ENCODE measurements at regions of chr5 and their contacts with region 1.

Region 1: GRCh38 chr5:139417214-139417613 is 13.3 kb upstream of the SPATA24 start:
- DNase-seq: no peak
- H3K4me3 Mint-ChIP-seq: no peak overlapping the region
- H3K27ac Mint-ChIP-seq: peak overlapping the region; percentile 97
- H3K4me1 Mint-ChIP-seq: peaks cover 59% of the 10 kb centered on the region
- H3K27me3 Mint-ChIP-seq: no peaks in the 10 kb centered on the region

Region 2: GRCh38 chr5:139262742-139263445 is 154.3 kb before region 1 on chr5:
- intact Hi-C with region 1: no loop called
- DNase-seq: peak; percentile 57
- H3K4me3 Mint-ChIP-seq: no peak overlapping the region
- H3K27ac Mint-ChIP-seq: no peak overlapping the region
- H3K4me1 Mint-ChIP-seq: peaks cover 11% of the 10 kb centered on the region
- H3K27me3 Mint-ChIP-seq: peaks cover 25% of the 10 kb centered on the region

Region 3: GRCh38 chr5:139392678-139393496 is 24.3 kb before region 1 on chr5:
- intact Hi-C with region 1: loop called (anchors 1 kb)
- DNase-seq: peak; percentile 84
- H3K4me3 Mint-ChIP-seq: peak overlapping the region; percentile 96
- H3K27ac Mint-ChIP-seq: peak overlapping the region; percentile 97
- H3K4me1 Mint-ChIP-seq: peaks cover 51% of the 10 kb centered on the region
- H3K27me3 Mint-ChIP-seq: no peaks in the 10 kb centered on the region

Region 4: GRCh38 chr5:139439013-139439903 is 22.0 kb after region 1 on chr5 and contains the start of gene DNAJC18:
- intact Hi-C with region 1: loop called (anchors 2 kb)
- DNase-seq: peak; percentile 84
- H3K4me3 Mint-ChIP-seq: peak within 1 kb of the TSS; percentile 93
- H3K27ac Mint-ChIP-seq: peak within 1 kb of the TSS; percentile 98
- H3K4me1 Mint-ChIP-seq: peaks cover 58% of the 10 kb centered on the region
- H3K27me3 Mint-ChIP-seq: no peaks in the 10 kb centered on the region
- total RNA-seq, gene DNAJC18: 29.8 and 35.8 TPM in 2 replicates

Region 5: GRCh38 chr5:139458580-139459406 is 41.6 kb after region 1 on chr5:
- intact Hi-C with region 1: loop called (anchors 1 kb)
- DNase-seq: peak; percentile 77
- H3K4me3 Mint-ChIP-seq: peak overlapping the region; percentile 72
- H3K27ac Mint-ChIP-seq: peak overlapping the region; percentile 99
- H3K4me1 Mint-ChIP-seq: peaks cover 59% of the 10 kb centered on the region
- H3K27me3 Mint-ChIP-seq: no peaks in the 10 kb centered on the region

Region 6: GRCh38 chr5:139492700-139493192 is 75.5 kb after region 1 on chr5:
- intact Hi-C with region 1: no loop called
- DNase-seq: no peak
- H3K4me3 Mint-ChIP-seq: no peak overlapping the region
- H3K27ac Mint-ChIP-seq: no peak overlapping the region
- H3K4me1 Mint-ChIP-seq: peaks cover 33% of the 10 kb centered on the region
- H3K27me3 Mint-ChIP-seq: no peaks in the 10 kb centered on the region

Region 7: DNA sequence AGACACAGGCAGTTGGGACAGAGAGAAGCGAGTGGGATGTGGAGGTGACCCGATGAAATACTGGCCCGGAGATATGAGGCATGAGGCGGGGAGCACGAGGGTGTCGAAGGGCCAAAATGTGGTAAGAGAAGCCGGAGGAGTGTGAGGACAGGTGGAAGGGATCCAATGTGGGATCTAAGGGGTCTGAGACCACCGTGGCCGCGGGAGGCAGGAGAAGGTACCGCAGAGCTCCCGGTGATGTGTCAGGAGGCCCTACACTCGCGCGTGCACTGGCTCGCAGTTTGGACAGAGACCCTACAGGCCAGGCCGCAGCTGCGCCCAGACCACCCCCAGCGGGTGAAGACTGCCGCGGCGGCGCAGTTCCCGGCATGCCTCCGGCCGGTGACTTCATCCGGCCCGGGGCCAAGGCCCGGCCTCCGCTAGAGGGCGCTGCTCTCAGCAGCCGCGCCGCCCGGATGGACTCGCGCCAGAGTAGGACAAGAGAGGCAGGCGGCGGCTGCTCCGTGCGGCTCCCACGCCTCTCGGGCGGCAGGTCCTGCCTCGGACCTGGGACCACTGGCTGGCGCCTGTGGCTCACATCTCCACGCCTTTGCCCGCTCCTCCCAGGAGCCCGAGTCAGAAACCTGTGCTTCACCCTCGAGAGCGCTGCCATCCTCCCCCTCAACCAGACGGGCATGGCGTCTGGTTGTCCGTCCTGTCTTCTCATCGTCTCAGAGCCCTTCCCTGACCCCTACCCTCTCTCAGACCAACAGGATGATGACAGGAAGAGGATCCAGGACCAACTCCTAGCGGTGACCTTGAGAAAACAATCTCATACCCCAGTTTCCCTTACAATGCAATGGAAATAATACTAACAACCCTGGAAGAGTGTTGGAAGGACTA is 100.7 kb after region 1 on chr5:
- intact Hi-C with region 1: loop called (anchors 1 kb)
- DNase-seq: peak; percentile 85
- H3K4me3 Mint-ChIP-seq: peak overlapping the region; percentile 79
- H3K27ac Mint-ChIP-seq: peak overlapping the region; percentile 88
- H3K4me1 Mint-ChIP-seq: peaks cover 23% of the 10 kb centered on the region
- H3K27me3 Mint-ChIP-seq: no peaks in the 10 kb centered on the region

Region 8: DNA sequence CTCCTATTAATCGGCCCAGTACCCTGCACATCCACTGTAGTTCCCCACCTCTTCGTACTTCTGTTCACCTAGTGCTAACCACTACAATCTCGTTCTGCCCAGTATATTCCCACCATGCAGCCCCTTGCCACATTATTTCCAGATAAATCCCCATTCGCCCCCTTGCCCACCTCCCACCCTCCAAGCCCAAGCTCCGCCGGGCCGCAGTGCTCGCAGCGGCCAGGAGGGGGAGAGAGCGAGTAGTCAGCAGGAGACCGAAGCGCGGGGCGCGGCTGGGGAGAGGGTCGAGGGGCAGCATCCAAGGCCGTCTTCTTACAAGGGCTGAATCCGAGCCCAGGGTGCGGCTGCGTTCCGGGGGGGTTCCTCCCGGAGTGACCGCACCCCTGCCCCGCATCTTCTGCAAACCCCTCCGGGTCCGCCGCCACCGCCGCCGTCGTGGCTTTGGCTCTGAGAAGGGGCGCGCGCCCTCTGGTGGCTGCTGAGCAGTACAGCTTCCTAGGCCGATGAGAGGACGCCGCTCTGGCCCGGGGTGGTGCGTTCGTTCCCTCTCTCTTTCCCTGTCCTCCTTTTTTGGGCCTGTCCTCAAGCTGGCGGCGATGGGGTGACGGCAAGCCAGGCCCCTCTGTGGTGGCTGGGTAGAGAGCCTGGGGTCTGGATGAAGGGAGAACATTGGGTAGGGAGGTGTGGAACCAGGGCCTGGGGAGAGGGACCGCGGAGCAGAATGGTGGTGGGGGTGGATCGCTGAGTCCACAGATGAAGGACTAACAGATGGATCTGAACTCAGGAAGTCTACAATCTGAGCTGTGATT is 348.4 kb after region 1 on chr5:
- intact Hi-C with region 1: loop called (anchors 10 kb)
- DNase-seq: peak; percentile 68
- H3K4me3 Mint-ChIP-seq: peak overlapping the region; percentile 56
- H3K27ac Mint-ChIP-seq: no peak overlapping the region
- H3K4me1 Mint-ChIP-seq: peaks cover 8% of the 10 kb centered on the region
- H3K27me3 Mint-ChIP-seq: peaks cover 39% of the 10 kb centered on the region

Region 9: GRCh38 chr5:139863855-139864558 is 446.8 kb after region 1 on chr5:
- intact Hi-C with region 1: no loop called
- DNase-seq: peak; percentile 12
- H3K4me3 Mint-ChIP-seq: no peak overlapping the region
- H3K27ac Mint-ChIP-seq: no peak overlapping the region
- H3K4me1 Mint-ChIP-seq: no peaks in the 10 kb centered on the region
- H3K27me3 Mint-ChIP-seq: peaks cover 11% of the 10 kb centered on the region

Measured in activated T-helper 2 cell treated with anti-CD3 and anti-CD28 coated beads, Interferon-gamma antibody, Interleukin-2, Interleukin-4, amounts not matched to agents 10 μg/mL and 5 μg/mL and 100 μg/mL, durations not matched to agents 14 hours and 24 hours and 36 hours (primary cell).